ENCODE measurements at regions of chr20 and their contacts with region 1.

Region 1: DNA sequence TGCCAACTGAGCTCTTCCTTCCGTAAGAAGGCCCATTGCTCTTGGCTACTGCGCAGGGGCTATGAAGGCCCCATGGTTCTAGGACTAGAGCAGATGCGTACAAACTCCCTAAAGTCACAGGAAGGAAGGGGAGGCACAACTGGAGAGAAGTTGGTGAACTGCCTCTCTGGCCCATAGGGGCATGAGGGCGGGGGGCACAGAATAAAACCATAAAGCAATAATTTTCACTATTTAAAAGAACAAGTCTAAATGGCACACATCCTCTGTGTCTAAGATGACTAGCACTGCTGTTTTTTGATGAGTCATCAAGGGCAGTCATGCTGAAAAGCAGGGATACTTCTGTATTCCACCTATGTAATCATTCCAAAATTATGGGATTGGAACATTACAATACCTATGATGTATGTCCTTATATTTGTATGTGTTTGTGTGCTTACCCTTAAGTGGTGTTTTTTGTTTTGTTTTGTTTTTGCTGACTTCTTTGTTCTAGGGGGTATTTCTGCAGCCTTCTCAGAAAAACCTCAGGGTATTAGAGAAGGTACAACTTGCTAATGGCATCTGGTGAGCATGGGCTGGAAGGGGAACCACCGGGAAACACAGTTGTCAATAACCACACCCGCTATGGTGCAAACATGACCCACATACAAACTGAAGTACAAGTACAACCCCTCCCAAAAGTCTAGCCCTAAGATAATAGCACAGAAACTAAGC is 36.9 kb downstream of the B4GALT5 start:
- DNase-seq: peak; percentile 94
- ATAC-seq: peak; percentile 66
- H3K4me3 ChIP-seq: peak overlapping the region; percentile 52
- H3K27ac ChIP-seq: peak overlapping the region; percentile 91
- H3K4me1 ChIP-seq: peaks cover 68% of the 10 kb centered on the region
- H3K27me3 ChIP-seq: no peaks in the 10 kb centered on the region
- CTCF ChIP-seq: no peak

Region 2: GRCh38 chr20:49583669-49584417 is 92.9 kb before region 1 on chr20:
- CTCF ChIA-PET with region 1: no interaction called
- POLR2A ChIA-PET with region 1: no interaction called
- intact Hi-C with region 1: no loop called
- DNase-seq: peak; percentile 56
- ATAC-seq: no peak; the same call in 1 of the 2 replicates
- H3K4me3 ChIP-seq: no peak overlapping the region
- H3K27ac ChIP-seq: no peak overlapping the region
- H3K4me1 ChIP-seq: peaks cover 32% of the 10 kb centered on the region
- H3K27me3 ChIP-seq: no peaks in the 10 kb centered on the region
- CTCF ChIP-seq: no peak

Region 3: GRCh38 chr20:49657118-49657901 is 19.4 kb before region 1 on chr20:
- CTCF ChIA-PET with region 1: interaction called, 6 read pairs
- POLR2A ChIA-PET with region 1: no interaction called
- intact Hi-C with region 1: loop called (anchors 1 kb)
- DNase-seq: no peak
- ATAC-seq: no peak
- H3K4me3 ChIP-seq: no peak overlapping the region; the same call in 1 of the 2 replicates
- H3K27ac ChIP-seq: peak overlapping the region; percentile 63
- H3K4me1 ChIP-seq: peaks cover 14% of the 10 kb centered on the region
- H3K27me3 ChIP-seq: no peaks in the 10 kb centered on the region
- CTCF ChIP-seq: no peak

Region 4: GRCh38 chr20:49700411-49701185 is 23.9 kb after region 1 on chr20:
- CTCF ChIA-PET with region 1: no interaction called
- POLR2A ChIA-PET with region 1: no interaction called
- intact Hi-C with region 1: loop called (anchors 2 kb)
- DNase-seq: peak; percentile 85
- ATAC-seq: peak; percentile 78
- H3K4me3 ChIP-seq: peak overlapping the region; percentile 3; the same call in 1 of the 2 replicates
- H3K27ac ChIP-seq: peak overlapping the region; percentile 85
- H3K4me1 ChIP-seq: peaks cover 55% of the 10 kb centered on the region
- H3K27me3 ChIP-seq: no peaks in the 10 kb centered on the region
- CTCF ChIP-seq: no peak

Region 5: DNA sequence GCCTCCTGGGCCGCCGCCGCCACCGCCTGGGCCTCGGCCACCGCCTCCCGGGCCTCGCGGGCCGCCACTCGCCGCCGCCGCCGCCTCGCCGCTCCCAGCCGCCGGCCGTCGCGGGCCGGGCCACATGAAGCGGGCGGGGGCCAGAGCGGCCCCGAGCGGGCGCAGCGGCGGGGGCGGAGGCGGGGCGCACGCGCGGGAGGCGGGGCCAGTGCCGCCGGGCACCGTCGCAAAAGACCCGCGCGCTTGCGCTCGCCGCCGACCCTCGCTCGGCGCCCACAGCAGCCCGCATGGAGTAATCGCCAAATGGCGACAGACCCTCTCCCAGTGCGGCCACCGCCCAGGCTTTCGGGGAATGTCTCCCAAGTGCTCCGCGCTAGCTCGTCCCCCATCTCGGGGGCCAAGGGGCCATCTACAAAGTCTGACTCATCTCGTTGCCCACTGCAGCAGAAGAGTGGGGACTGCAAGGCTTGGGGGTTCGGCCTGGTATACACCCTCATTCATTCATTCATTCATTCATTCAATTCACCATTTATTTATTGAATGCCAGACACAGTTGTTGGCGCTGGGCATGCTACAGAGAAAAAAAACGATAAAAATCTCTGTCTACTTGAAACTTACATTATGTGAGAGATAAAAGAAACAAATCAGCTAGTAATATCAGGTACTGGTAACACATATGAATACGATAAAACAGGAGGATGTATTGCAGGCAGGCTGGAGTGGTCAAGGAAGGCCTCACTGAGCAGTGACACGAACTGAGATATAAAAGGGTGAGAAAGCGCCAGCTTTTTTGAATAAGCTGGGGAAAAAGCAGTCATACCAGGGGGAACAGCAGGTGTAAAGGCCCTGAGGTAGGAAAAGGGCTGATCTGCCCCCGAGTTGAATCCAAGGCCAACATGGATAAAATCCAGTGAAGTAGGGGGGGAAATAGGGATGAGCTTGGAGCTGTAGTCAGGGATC is 37.3 kb after region 1 on chr20 and contains the start of gene B4GALT5:
- CTCF ChIA-PET with region 1: no interaction called
- POLR2A ChIA-PET with region 1: interaction called, 4 read pairs
- intact Hi-C with region 1: loop called (anchors 5 kb)
- DNase-seq: peak; percentile 80
- ATAC-seq: peak; percentile 81
- H3K4me3 ChIP-seq: peak within 1 kb of the TSS; percentile 94
- H3K27ac ChIP-seq: peak within 1 kb of the TSS; percentile 31
- H3K4me1 ChIP-seq: peaks cover 33% of the 10 kb centered on the region
- H3K27me3 ChIP-seq: no peaks in the 10 kb centered on the region
- CTCF ChIP-seq: no peak
- total RNA-seq, gene B4GALT5: 18.1 and 24.1 TPM in 2 replicates

Region 6: GRCh38 chr20:49821870-49822331 is 145.2 kb after region 1 on chr20:
- CTCF ChIA-PET with region 1: no interaction called
- POLR2A ChIA-PET with region 1: no interaction called
- intact Hi-C with region 1: loop called (anchors 5 kb)
- DNase-seq: peak; percentile 37
- ATAC-seq: no peak
- H3K4me3 ChIP-seq: no peak overlapping the region
- H3K27ac ChIP-seq: no peak overlapping the region
- H3K4me1 ChIP-seq: peaks cover 14% of the 10 kb centered on the region; the same call in 1 of the 2 replicates
- H3K27me3 ChIP-seq: no peaks in the 10 kb centered on the region
- CTCF ChIP-seq: peak; percentile 24; the same call in 1 of the 2 replicates

Region 7: DNA sequence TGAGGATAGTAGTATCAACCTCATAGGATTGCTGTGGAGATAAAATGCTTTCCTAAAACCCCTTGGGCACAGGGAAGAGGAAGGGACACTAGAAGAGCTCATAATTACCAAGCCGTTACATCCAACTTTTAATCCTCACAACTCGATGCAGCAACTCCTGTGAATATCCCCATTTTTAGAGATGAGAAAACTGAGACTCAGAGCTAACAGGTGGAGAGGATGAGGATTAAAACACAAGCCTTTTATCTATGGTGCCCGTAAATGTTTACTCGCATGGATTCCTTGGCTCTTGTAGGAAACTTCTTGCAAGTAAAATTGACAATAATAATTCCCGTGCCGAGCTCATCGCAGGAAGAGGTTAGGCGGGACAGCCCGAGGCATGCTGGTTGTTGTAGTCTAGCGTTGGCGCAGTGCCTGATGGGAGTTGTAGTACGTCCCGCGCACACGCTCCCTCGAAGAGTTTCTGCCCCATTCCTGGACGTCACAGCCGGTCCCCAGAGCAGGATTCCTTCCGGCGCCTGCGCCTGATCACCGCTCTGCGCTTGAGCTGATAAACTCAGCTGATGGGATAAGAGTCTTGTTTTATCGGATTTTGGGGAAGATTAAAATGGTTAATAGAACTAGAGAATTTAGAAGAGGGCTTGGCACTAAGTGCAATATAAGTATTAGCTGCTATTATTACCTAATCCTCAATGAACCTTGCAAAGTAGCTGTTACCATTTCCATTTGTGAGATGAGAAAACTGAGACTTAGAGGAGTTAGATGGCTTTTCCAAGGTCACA is 439.0 kb after region 1 on chr20:
- CTCF ChIA-PET with region 1: no interaction called
- POLR2A ChIA-PET with region 1: interaction called, 19 read pairs
- intact Hi-C with region 1: no loop called
- DNase-seq: peak; percentile 100
- ATAC-seq: peak; percentile 73
- H3K4me3 ChIP-seq: peak overlapping the region; percentile 74
- H3K27ac ChIP-seq: no peak overlapping the region
- H3K4me1 ChIP-seq: peaks cover 31% of the 10 kb centered on the region
- H3K27me3 ChIP-seq: no peaks in the 10 kb centered on the region
- CTCF ChIP-seq: no peak